Mammary epithelial cell (primary cell): ENCODE measurements at regions of chr12 and their contacts with region 1.

Region 1: DNA sequence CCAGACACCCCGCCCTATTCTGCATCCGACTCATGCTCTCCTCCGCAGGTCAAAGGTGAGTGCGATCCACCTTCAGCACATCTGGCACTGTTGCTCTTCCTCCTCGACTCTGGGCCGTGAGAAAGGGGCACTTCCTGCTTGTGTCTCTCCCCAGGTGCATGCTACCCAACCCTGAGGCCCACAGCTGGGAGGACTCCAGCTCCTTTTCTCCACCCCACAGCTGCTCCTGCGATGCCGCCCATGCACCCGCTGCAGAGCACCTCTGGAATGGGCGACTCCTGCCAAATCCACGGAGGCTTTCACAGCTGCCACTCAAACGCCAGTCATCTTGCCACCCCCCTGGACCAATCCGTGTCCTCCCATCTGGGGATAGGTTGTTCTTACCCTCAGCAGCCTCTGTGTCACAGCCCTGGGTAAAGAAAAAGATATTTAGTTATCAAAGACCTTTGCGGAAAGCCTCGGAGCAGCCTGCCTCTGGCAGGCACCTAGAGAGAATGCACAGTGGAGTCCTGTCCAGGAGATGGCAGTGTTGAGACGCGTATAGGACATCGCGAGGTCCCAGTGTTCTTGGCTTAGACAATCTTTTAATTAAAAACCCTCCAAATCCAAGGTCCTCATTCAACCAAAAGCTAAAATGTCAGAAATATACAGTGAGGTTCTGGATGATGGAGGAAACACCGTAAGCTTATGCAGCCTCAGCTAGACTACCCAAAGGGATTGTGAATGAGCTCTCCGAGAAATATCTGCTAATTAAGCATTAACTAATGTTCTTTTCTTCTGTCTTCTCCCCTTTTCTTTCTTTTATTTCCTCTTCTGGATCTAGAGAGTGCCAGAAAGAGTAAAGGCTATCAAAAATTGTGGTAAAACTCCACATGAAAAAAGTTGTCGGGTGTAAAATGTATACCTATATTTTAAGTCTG is 54.3 kb downstream of the MYRFL start:
- DNase-seq: peak; percentile 55
- H3K4me3 ChIP-seq: peak overlapping the region; percentile 4 to 32 (median 28)
- H3K27ac ChIP-seq: no peak overlapping the region
- H3K4me1 ChIP-seq: peaks cover 6% of the 10 kb centered on the region
- H3K27me3 ChIP-seq: no peaks in the 10 kb centered on the region
- CTCF ChIP-seq: peak; percentile 92 to 96

Region 2: GRCh38 chr12:69359531-69360347 is 519.6 kb before region 1 on chr12 and contains the start of gene YEATS4:
- CTCF ChIA-PET with region 1: no interaction called
- dilution Hi-C with region 1: no loop called
- in situ Hi-C with region 1: no loop called
- intact Hi-C with region 1: loop called (anchors 5 kb)
- DNase-seq: peak; percentile 98
- H3K4me3 ChIP-seq: peak within 1 kb of the TSS; percentile 44 to 77 (median 74)
- H3K27ac ChIP-seq: peak within 1 kb of the TSS; percentile 97
- H3K4me1 ChIP-seq: peaks cover 8% of the 10 kb centered on the region
- H3K27me3 ChIP-seq: no peaks in the 10 kb centered on the region
- CTCF ChIP-seq: no peak
- total RNA-seq, gene YEATS4: 18.2 to 19.7 TPM

Region 3: DNA sequence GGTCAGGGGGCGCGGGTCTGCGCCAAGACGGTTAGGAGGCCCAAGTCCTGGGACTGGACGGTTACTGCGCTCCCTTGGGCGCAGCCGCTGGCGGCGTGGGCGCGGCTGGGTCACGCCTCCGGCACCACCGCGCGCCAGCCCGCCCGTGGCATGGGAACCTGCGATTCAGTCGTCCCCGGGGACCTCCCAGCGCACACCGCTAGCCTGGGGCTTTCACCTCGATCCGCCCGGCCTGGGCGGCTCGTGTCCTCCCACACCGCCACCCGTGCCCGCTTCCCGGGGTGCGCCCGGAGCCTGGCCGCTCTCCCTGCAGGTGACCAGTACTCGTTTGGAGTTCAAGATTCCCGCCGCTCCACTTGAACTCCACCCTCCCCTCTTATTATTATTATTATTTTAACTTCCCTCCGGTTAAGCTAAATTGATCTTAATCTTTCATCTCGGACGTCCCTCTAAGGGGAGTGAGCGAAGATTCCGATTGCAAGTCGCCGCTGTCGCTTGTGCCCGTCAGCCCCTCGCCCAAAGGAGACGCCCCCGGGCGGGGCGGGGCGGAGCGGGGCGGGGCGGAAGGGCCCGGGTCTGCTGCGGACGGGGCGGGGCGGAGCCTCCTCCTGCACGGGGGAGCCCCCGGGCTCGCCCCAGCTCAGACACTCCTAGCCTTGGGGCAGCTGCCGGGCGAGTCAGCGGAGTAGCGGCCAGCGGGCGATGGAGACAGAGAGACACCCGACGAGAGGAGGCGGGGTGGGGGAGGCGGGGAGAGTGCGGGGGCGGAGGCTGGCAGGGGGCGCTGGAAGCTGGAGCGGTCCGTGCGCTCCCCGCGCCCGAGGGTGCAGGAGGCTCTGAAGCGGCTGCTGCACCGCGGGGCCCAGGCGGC is 486.6 kb after region 1 on chr12 and contains the start of gene KCNMB4:
- CTCF ChIA-PET with region 1: no interaction called
- dilution Hi-C with region 1: no loop called
- in situ Hi-C with region 1: loop called in 1 of 2 experiments (anchors 25 kb)
- intact Hi-C with region 1: loop called (anchors 5 kb)
- DNase-seq: peak; percentile 43
- H3K4me3 ChIP-seq: peak within 1 kb of the TSS; percentile 60 to 97 (median 62)
- H3K27ac ChIP-seq: no peak within 1 kb of the TSS
- H3K4me1 ChIP-seq: peaks cover 19% of the 10 kb centered on the region
- H3K27me3 ChIP-seq: no peaks in the 10 kb centered on the region
- CTCF ChIP-seq: no peak
- total RNA-seq, gene KCNMB4: 0.28 to 1.0 TPM

Region 4: DNA sequence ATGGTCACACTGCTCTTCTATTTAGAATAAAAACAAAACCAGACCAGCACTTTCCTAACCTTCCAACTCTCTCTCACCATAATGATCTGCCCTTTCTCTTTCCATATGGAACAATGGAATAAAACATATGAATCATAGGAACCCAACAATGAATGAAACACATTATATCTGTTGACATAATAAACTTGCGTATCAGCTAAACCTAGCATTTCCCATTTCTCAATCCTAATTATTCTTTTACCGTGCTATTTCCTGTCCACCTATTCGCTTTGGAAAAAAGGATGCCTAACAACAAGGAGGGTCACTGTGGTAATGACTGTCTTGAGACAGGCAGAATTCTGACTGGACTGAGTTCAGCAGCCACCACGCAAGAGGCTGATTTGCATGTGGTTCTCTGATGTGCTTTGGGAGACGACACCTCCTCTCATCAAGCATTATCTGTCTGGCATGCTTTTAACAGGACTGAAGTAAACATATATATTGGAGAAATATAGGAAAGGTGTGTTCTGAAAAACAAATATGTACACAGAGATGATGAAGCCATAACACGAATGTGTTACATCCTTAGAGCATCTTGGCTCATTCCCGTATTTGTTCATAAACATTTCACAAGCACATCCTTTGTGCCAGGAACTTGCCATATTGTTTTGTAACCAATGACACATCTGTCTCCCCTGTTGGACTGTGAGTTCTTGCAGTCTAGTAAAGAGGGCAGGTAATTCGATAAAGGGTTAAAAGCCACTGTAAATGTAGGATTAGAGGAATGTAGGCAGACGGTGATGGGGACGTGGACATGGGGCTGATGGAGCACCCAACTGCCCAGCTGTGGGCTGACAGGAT is 670.3 kb after region 1 on chr12:
- CTCF ChIA-PET with region 1: no interaction called
- dilution Hi-C with region 1: loop called (anchors 25 kb)
- in situ Hi-C with region 1: no loop called
- intact Hi-C with region 1: no loop called
- DNase-seq: no peak
- H3K4me3 ChIP-seq: no peak overlapping the region
- H3K27ac ChIP-seq: no peak overlapping the region
- H3K4me1 ChIP-seq: no peaks in the 10 kb centered on the region
- H3K27me3 ChIP-seq: no peaks in the 10 kb centered on the region
- CTCF ChIP-seq: no peak

Region 5: DNA sequence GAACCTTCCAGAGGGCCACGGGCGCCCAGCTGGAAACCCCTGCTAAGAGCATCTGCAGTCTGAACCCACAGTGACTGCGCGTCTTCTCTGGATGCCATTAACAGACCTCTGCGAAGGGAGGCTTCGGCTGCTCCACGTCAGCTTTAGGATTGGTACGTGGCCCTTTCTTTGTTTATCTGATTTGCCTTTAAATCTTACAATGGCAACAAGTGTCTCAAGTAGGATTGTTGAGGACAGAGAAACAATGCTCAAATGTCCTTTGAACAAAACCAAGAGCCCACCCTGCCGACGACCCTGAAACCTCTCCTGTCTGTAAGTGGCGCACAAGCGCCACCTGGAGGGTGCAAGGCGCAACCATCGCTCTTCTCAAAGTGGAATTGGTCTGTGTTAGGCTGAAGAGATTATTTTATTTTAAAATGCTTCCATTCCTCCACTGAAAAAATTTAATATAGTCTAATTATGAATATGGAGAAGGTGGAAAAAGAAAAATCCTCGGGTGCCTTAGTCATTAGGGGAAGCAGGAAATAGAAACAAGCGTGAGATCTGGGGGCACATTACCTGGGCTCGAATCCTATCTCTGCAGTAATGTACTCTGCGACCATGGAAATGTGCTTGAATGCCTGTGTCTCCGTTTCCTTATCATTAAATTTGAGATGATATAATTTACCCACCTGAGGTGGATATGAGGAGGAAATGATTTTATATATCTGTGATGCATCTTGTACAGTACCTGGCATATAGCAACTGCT is 840.5 kb after region 1 on chr12:
- CTCF ChIA-PET with region 1: no interaction called
- dilution Hi-C with region 1: no loop called
- in situ Hi-C with region 1: loop called (anchors 10 to 25 kb)
- intact Hi-C with region 1: loop called (anchors 1 kb)
- DNase-seq: peak; percentile 9
- H3K4me3 ChIP-seq: peak overlapping the region in 2 of 3 experiments; percentile 14 to 25
- H3K27ac ChIP-seq: no peak overlapping the region
- H3K4me1 ChIP-seq: no peaks in the 10 kb centered on the region
- H3K27me3 ChIP-seq: no peaks in the 10 kb centered on the region
- CTCF ChIP-seq: peak; percentile 88 to 95